ENCODE measurements at regions of chr10 and their contacts with region 1.

Region 1: GRCh38 chr10:122112625-122113160 is 123.7 kb downstream of the TACC2 start:
- DNase-seq: peak; percentile 76 to 92 (median 84)
- ATAC-seq: peak; percentile 87
- H3K4me3 ChIP-seq: peak overlapping the region; percentile 60 to 69
- H3K27ac ChIP-seq: peak overlapping the region; percentile 95 to 97
- H3K4me1 ChIP-seq: peaks cover 8 to 34% of the 10 kb centered on the region in 2 donors
- H3K27me3 ChIP-seq: peaks cover 0 to 34% of the 10 kb centered on the region in 2 donors
- CTCF ChIP-seq: peak in 1 of 2 donors; percentile 18

Region 2: DNA sequence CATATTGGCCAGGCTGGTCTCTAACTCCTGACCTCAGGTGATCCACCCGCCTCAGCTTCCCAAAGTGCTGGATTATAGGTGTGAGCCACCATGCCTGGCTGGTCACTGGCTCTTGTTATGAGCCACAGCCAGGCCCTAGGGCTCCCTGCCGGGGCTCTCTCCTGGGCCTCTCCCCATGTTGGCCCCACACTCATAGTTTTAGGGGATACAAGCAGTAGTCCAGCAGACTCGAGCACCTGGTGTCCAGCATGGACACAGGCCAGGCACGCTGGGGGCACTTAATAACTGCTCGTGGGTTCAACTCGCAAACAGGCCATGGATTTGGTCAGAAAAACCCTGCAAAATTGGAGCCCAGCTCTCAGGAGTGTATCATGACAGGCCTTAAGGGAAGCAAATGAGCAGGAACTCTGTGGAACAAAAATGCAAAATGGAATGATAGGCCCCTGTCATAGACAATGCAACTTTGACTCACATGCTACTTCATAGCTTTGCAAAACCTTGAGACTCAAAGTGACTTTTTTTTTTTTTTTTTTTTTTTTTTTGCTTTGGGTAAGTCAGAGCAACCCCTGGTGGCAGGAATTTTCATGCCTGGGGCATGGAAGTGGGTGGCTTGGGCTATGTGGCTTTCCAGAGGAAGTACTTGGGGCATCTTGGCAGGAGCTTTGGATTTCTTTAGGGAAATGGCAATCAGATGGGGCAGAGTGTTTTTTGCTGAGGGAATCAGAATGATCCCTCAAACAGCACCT is 61.3 kb before region 1 on chr10:
- intact Hi-C with region 1: loop called in 1 of 2 experiments (anchors 10 kb)
- DNase-seq: peak in 3 of 4 donors; percentile 36 to 73 (median 64)
- ATAC-seq: peak; percentile 81
- H3K4me3 ChIP-seq: no peak overlapping the region
- H3K27ac ChIP-seq: no peak overlapping the region
- H3K4me1 ChIP-seq: peaks cover 0 to 10% of the 10 kb centered on the region in 2 donors
- H3K27me3 ChIP-seq: no peaks in the 10 kb centered on the region
- CTCF ChIP-seq: peak; percentile 65 to 72

Region 3: DNA sequence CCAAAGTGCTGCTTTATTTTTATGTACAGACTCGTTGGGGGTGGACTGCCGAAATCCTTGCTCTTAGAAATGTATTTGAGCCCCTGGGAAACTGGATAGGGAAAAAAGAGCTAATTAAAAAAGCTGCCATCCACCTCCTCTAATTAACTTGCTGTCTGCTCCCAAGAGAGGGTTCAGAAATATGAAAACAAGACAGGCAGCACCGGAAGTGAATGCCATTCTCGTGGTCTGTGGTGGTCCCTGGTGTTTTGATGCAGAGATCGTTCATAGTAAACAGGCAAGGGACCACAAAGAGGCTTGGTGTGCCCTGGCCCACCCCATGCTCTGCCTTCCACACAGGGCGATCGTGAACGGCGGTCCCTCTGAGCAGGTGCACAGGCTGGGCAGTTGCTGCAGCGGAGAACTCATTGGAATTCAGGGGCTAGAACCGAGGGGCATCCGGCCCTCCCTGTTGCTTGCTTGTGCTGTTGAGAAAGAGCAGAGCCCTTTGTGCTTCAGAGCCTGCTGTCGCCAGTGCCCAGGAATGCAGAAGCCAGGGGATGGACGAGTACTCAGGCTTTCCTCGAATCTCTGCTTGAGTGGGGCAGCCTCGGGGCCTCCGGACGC is 79.3 kb after region 1 on chr10:
- intact Hi-C with region 1: no loop called
- DNase-seq: peak in 1 of 4 donors; percentile 5
- ATAC-seq: no peak
- H3K4me3 ChIP-seq: no peak overlapping the region
- H3K27ac ChIP-seq: no peak overlapping the region
- H3K4me1 ChIP-seq: no peaks in the 10 kb centered on the region
- H3K27me3 ChIP-seq: no peaks in the 10 kb centered on the region
- CTCF ChIP-seq: no peak

Measured in left lung (tissue), 14 donors.